Activated CD8-positive, alpha-beta T cell treated with anti-CD3 and anti-CD28 coated beads, Interleukin-2, amount 10 ng/mL, durations not matched to agents 7 days and 5 days (primary cell): ENCODE measurements at regions of chr1 and their contacts with region 1.

Region 1: GRCh38 chr1:156025877-156026276 is 5.1 kb upstream of the SSR2 start:
- DNase-seq: peak; percentile 58
- ATAC-seq: peak; percentile 86
- H3K4me3 Mint-ChIP-seq: no peak overlapping the region
- H3K27ac Mint-ChIP-seq: no peak overlapping the region
- H3K4me1 Mint-ChIP-seq: peaks cover 18% of the 10 kb centered on the region
- H3K27me3 Mint-ChIP-seq: peaks cover 13% of the 10 kb centered on the region

Region 2: GRCh38 chr1:156014826-156015225 is 11.1 kb before region 1 on chr1:
- CTCF ChIA-PET with region 1: interaction called, 14 read pairs
- POLR2A ChIA-PET with region 1: no interaction called
- DNase-seq: no peak
- ATAC-seq: no peak
- H3K4me3 Mint-ChIP-seq: no peak overlapping the region
- H3K27ac Mint-ChIP-seq: no peak overlapping the region
- H3K4me1 Mint-ChIP-seq: peaks cover 15% of the 10 kb centered on the region
- H3K27me3 Mint-ChIP-seq: no peaks in the 10 kb centered on the region

Region 3: GRCh38 chr1:156053770-156054499 is 28.1 kb after region 1 on chr1 and contains the start of gene UBQLN4:
- CTCF ChIA-PET with region 1: interaction called, 12 read pairs
- POLR2A ChIA-PET with region 1: no interaction called
- DNase-seq: peak; percentile 90
- ATAC-seq: peak; percentile 55
- H3K4me3 Mint-ChIP-seq: peak within 1 kb of the TSS; percentile 96
- H3K27ac Mint-ChIP-seq: peak within 1 kb of the TSS; percentile 91
- H3K4me1 Mint-ChIP-seq: peaks cover 23% of the 10 kb centered on the region
- H3K27me3 Mint-ChIP-seq: no peaks in the 10 kb centered on the region
- total RNA-seq, gene UBQLN4: 32.8 to 33.3 TPM